B cell (primary cell): ENCODE measurements at regions of chr5 and their contacts with region 1.

Region 1: DNA sequence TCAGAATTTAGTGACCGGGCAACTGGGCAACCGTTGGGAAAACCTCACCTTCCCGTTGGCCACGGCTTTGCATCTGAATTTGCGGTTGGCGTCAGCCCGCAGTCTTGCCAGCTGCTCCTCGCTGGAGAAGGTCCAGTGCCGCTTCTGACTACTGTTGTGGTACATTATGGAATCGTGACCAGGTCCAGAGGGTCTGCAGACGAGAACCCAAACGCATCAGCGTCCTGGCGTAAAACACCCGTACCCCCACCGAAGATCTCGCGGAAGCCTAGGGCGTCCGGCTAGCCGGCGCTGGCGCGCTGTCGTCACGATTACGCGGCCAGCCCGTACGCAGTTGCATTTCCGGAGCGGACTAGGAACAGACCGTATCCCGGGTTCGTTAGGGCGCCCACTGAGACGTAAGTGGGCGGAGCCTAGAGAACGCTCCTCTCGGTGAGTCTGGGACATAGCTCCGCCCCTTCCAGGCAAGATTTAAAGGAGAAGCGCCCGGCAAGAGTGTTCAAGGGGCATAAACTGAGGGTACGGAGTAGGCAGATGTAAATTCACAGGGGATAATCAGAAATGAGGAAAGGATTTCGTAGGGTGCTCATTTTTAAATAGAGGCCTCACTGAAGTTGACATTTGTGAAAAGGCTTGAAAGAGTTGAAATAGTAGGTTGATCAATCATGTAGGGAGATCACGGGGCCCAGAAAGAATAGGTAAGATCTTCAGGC is at the start of gene CCNH:
- DNase-seq: peak; percentile 98
- ATAC-seq: peak; percentile 99
- H3K4me3 ChIP-seq: peak within 1 kb of the TSS; percentile 76 to 100 (median 84)
- H3K4me3 Mint-ChIP-seq: peak within 1 kb of the TSS; percentile 93
- H3K27ac ChIP-seq: peak within 1 kb of the TSS; percentile 89 to 96
- H3K27ac Mint-ChIP-seq: peak within 1 kb of the TSS; percentile 93
- H3K4me1 ChIP-seq: peaks cover 13 to 20% of the 10 kb centered on the region in 2 donors
- H3K4me1 Mint-ChIP-seq: peaks cover 30% of the 10 kb centered on the region
- H3K27me3 ChIP-seq: no peaks in the 10 kb centered on the region
- H3K27me3 Mint-ChIP-seq: no peaks in the 10 kb centered on the region
- CTCF ChIP-seq: no peak
- total RNA-seq, gene CCNH: 120 and 137 TPM in 2 replicates

Region 2: DNA sequence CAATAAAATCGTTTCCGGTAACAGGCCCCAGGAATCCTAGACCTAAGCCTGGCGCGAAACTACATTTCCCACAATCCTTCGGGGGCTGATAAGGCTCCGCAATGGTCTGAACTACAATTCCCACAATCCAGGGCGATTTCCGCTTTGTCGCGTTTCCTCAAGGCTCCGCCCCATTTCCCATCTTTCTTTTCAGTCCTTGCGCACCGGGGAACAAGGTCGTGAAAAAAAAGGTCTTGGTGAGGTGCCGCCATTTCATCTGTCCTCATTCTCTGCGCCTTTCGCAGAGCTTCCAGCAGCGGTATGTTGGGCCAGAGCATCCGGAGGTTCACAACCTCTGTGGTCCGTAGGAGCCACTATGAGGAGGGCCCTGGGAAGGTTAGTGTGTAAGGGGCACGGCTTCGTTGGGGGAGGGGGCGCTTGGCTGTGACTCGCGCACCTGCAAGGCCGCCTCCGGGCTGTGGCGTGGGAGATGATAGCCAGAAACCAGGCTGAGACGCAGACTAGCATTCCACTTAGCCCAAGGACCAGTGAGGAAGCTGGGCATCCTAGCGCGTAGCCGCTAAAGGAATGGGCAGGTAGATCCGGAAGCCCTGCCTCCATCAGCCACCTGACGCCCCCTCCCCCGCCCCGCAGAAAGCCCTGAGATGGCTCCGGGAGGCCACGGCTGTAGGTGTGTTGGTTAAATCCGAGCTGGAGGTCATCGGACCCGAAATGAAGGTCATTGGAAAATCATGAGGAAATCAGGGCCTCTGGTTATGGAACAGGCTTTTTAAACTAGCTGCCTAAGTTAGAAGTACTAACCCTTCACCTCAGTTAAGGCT is 794.8 kb before region 1 on chr5 and contains the start of gene COX7C:
- CTCF ChIA-PET with region 1: no interaction called
- POLR2A ChIA-PET with region 1: no interaction called
- intact Hi-C with region 1: loop called (anchors 1 kb)
- DNase-seq: peak; percentile 97
- ATAC-seq: peak; percentile 98
- H3K4me3 ChIP-seq: peak within 1 kb of the TSS; percentile 83 to 99 (median 94)
- H3K4me3 Mint-ChIP-seq: peak within 1 kb of the TSS; percentile 100
- H3K27ac ChIP-seq: peak within 1 kb of the TSS; percentile 90 to 95
- H3K27ac Mint-ChIP-seq: peak within 1 kb of the TSS; percentile 99
- H3K4me1 ChIP-seq: peaks cover 15 to 18% of the 10 kb centered on the region in 2 donors
- H3K4me1 Mint-ChIP-seq: peaks cover 25% of the 10 kb centered on the region
- H3K27me3 ChIP-seq: peaks cover 0 to 15% (median 3%) of the 10 kb centered on the region in 4 experiments
- H3K27me3 Mint-ChIP-seq: peaks cover 16% of the 10 kb centered on the region
- CTCF ChIP-seq: no peak
- total RNA-seq, gene COX7C: 320 and 338 TPM in 2 replicates

Region 3: GRCh38 chr5:87081511-87082372 is 331.0 kb before region 1 on chr5:
- CTCF ChIA-PET with region 1: no interaction called
- POLR2A ChIA-PET with region 1: no interaction called
- intact Hi-C with region 1: loop called (anchors 1 kb)
- DNase-seq: peak; percentile 76
- ATAC-seq: peak; percentile 90
- H3K4me3 ChIP-seq: peak overlapping the region in 4 of 5 experiments; percentile 1 to 43 (median 17)
- H3K4me3 Mint-ChIP-seq: peak overlapping the region; percentile 75
- H3K27ac ChIP-seq: peak overlapping the region; percentile 68 to 69
- H3K27ac Mint-ChIP-seq: peak overlapping the region; percentile 89
- H3K4me1 ChIP-seq: peaks cover 37 to 53% of the 10 kb centered on the region in 2 donors
- H3K4me1 Mint-ChIP-seq: peaks cover 53% of the 10 kb centered on the region
- H3K27me3 ChIP-seq: no peaks in the 10 kb centered on the region
- H3K27me3 Mint-ChIP-seq: no peaks in the 10 kb centered on the region
- CTCF ChIP-seq: no peak

Region 4: DNA sequence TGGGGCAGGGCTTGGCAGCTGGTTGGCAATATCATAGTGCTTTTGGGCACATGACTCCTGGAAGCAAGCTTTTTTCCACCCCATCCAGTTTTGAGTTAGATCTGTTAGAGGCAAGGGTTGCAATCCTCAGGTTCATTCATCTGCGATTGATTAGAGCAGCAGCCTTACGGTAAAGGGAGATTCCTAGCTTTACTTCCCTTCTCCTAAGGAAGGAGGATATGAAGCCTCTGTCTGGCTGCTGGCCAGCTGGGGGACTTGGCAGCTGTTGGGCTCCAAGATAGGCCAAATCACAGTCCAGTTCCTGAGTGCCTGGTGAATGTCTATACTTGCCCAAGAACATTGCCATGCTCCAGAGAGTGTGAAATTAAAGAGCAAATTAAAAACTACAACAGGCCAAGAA is 113.3 kb after region 1 on chr5:
- CTCF ChIA-PET with region 1: no interaction called
- POLR2A ChIA-PET with region 1: no interaction called
- intact Hi-C with region 1: no loop called
- DNase-seq: no peak
- ATAC-seq: no peak
- H3K4me3 ChIP-seq: no peak overlapping the region
- H3K4me3 Mint-ChIP-seq: no peak overlapping the region
- H3K27ac ChIP-seq: no peak overlapping the region
- H3K27ac Mint-ChIP-seq: no peak overlapping the region
- H3K4me1 ChIP-seq: no peaks in the 10 kb centered on the region
- H3K4me1 Mint-ChIP-seq: no peaks in the 10 kb centered on the region
- H3K27me3 ChIP-seq: no peaks in the 10 kb centered on the region
- H3K27me3 Mint-ChIP-seq: no peaks in the 10 kb centered on the region
- CTCF ChIP-seq: no peak

Region 5: DNA sequence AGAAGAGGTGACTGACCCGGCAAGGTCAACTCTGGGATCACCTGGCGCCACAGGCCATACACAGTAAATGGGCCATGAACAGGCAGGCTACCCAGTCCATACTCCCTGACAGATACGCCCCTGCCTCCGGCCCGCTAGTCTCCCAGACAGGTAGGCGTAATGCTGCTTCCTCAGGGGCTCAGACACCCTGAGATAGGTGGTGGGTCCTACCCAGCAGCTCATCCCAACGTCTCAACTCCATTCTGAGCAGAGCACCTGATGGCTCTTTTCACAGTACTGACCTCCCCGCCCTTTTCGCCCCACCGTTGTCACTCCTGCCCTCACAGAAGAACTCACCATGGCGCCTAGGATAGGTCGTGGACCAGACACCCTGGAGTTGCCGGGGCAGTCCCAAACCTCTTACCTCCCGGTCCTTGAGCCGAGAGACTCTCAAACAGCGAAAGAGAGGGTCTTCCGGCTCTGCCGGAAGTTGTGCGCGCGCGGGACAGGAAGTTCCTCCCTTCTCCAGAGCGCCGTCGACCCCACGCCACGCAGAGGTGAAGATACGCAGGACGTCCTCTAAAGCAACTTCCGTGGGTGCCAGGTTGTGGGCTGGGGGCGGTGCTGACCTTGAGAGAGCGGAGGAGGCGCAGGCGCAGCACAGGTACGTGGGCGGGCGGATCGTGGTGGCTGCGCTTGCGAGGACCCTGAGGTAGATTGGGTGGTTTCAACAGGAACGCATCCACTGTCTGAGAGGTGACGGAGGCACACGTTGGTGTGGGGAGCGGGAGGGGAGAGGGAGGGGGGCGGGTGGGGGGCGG is 855.8 kb after region 1 on chr5 and contains the start of gene TMEM161B:
- CTCF ChIA-PET with region 1: no interaction called
- POLR2A ChIA-PET with region 1: no interaction called
- intact Hi-C with region 1: loop called (anchors 2 kb)
- DNase-seq: peak; percentile 97
- ATAC-seq: peak; percentile 99
- H3K4me3 ChIP-seq: peak within 1 kb of the TSS; percentile 74 to 98 (median 94)
- H3K4me3 Mint-ChIP-seq: peak within 1 kb of the TSS; percentile 97
- H3K27ac ChIP-seq: peak within 1 kb of the TSS; percentile 69 to 89
- H3K27ac Mint-ChIP-seq: peak within 1 kb of the TSS; percentile 97
- H3K4me1 ChIP-seq: peaks cover 14 to 21% of the 10 kb centered on the region in 2 donors
- H3K4me1 Mint-ChIP-seq: peaks cover 39% of the 10 kb centered on the region
- H3K27me3 ChIP-seq: no peaks in the 10 kb centered on the region
- H3K27me3 Mint-ChIP-seq: no peaks in the 10 kb centered on the region
- CTCF ChIP-seq: no peak
- total RNA-seq, gene TMEM161B: 32.2 and 33.8 TPM in 2 replicates